Prostate gland (tissue), 2 donors: ENCODE measurements at regions of chr15 and their contacts with region 1.

Region 1: GRCh38 chr15:30903497-30904201 is at the start of gene FAN1:
- DNase-seq: peak; percentile 91
- H3K4me3 ChIP-seq: peak within 1 kb of the TSS; percentile 69
- H3K27ac ChIP-seq: peak within 1 kb of the TSS; percentile 81 to 82
- H3K4me1 ChIP-seq: no peaks in the 10 kb centered on the region
- H3K27me3 ChIP-seq: no peaks in the 10 kb centered on the region
- CTCF ChIP-seq: peak in 2 of 4 experiments; percentile 22 to 30
- POLR2A ChIP-seq: peak; percentile 60
- total RNA-seq, gene FAN1: 25.0 to 26.0 TPM

Region 2: GRCh38 chr15:30791239-30792175 is 112.1 kb before region 1 on chr15:
- intact Hi-C with region 1: no loop called
- DNase-seq: no peak
- H3K4me3 ChIP-seq: no peak overlapping the region
- H3K27ac ChIP-seq: no peak overlapping the region
- H3K4me1 ChIP-seq: no peaks in the 10 kb centered on the region
- H3K27me3 ChIP-seq: no peaks in the 10 kb centered on the region
- CTCF ChIP-seq: no peak
- POLR2A ChIP-seq: no peak

Region 3: GRCh38 chr15:31128919-31129768 is 225.5 kb after region 1 on chr15:
- intact Hi-C with region 1: loop called (anchors 10 kb)
- DNase-seq: peak; percentile 75
- H3K4me3 ChIP-seq: no peak overlapping the region
- H3K27ac ChIP-seq: no peak overlapping the region
- H3K4me1 ChIP-seq: peaks cover 9% of the 10 kb centered on the region
- H3K27me3 ChIP-seq: no peaks in the 10 kb centered on the region
- CTCF ChIP-seq: peak; percentile 84 to 94 (median 91)
- POLR2A ChIP-seq: no peak

Region 4: DNA sequence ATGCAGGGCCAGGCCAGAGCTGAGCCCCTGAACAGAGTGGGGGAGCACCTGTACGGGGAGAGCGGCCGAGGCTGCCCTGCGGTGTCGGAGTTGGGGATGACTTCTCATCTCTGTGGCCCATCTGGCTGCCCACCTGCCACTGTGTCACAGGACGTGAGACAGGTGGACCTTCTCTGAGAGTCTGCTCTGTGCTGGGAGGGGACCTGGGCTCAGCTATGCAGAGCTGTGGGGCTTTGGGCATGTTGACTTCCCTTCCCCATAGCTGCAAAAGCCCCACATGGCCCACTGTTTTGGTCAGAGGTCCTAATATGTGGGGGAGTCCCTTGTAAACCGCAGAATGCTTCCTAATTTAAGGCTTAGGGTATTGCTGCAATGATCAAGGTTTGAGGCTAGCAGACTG is 265.9 kb after region 1 on chr15:
- intact Hi-C with region 1: no loop called
- DNase-seq: no peak
- H3K4me3 ChIP-seq: no peak overlapping the region
- H3K27ac ChIP-seq: no peak overlapping the region
- H3K4me1 ChIP-seq: no peaks in the 10 kb centered on the region
- H3K27me3 ChIP-seq: no peaks in the 10 kb centered on the region
- CTCF ChIP-seq: no peak
- POLR2A ChIP-seq: no peak